Activated CD8-positive, alpha-beta T cell treated with anti-CD3 and anti-CD28 coated beads, Interleukin-2, amount 10 ng/mL, durations not matched to agents 7 days and 5 days (primary cell): ENCODE measurements at regions of chr6 and their contacts with region 1.

Region 1: GRCh38 chr6:168884050-168884645 is 369.5 kb downstream of the THBS2 start:
- DNase-seq: no peak
- ATAC-seq: peak; percentile 68
- H3K4me3 Mint-ChIP-seq: peak overlapping the region; percentile 77
- H3K27ac Mint-ChIP-seq: peak overlapping the region; percentile 87
- H3K4me1 Mint-ChIP-seq: peaks cover 7% of the 10 kb centered on the region
- H3K27me3 Mint-ChIP-seq: no peaks in the 10 kb centered on the region

Region 2: DNA sequence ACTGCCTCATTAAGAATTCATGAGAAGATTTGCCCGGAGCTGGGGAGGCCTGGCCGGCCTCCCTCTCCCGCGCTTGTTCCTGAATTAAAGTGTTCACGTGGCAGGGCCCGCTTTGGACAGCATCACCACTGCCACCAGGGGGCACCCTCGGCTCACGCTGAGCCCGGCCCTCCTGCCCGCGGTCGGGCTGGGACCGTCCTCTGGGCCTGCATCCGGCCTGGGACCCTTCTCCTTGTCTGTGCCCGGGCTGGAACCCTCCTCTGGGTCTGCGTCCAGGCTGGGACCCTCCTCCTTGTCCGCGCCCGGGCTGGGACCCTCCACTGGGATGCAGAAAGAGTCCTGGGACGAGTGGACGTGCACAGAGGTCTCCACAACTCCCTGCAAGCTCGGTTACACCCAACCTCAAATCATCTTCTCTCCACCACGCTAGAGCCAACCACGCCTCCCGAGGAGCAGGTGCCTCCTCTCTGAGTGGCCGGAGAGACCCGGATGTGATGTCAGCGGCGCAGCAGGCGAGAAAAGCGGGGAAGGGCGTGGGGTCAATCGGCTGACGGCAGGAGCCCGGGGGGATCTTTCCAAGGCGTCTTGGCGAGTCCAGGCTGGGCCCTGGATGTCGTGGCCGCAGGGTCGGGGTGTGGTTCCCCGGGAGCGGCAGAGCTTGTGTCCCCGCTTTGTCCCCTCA is 513.7 kb before region 1 on chr6:
- CTCF ChIA-PET with region 1: interaction called, 11 read pairs
- POLR2A ChIA-PET with region 1: no interaction called
- DNase-seq: peak; percentile 69
- ATAC-seq: peak; percentile 85
- H3K4me3 Mint-ChIP-seq: no peak overlapping the region
- H3K27ac Mint-ChIP-seq: no peak overlapping the region
- H3K4me1 Mint-ChIP-seq: peaks cover 2% of the 10 kb centered on the region
- H3K27me3 Mint-ChIP-seq: no peaks in the 10 kb centered on the region

Region 3: DNA sequence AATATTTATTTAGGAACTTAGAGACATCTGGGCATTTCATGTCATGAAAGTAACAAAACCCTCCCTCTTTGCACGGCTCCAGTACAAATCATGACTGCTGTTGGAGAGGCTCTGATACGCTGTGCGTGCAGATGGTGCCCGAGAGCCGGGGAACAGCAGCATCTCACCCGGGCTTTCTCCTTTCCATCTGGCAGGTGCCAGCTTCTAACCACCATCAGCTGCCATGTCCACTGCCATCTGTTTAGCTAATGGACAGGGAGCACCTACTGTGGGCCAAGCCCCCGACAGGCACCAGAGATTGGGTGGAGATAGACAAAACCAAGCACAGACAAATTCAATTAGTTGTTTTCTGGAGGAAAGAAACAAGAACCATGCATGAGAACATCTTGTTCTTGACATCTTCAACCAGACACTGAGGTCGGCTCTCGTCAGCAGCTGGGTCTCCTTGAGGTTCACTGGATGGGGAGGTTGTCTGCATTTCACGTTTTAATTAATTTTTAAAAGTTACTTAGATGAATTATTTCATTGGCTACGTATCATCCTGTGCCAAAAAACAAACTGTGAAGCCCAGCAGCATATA is 45.8 kb after region 1 on chr6:
- CTCF ChIA-PET with region 1: no interaction called
- POLR2A ChIA-PET with region 1: no interaction called
- DNase-seq: no peak
- ATAC-seq: no peak
- H3K4me3 Mint-ChIP-seq: no peak overlapping the region
- H3K27ac Mint-ChIP-seq: no peak overlapping the region
- H3K4me1 Mint-ChIP-seq: no peaks in the 10 kb centered on the region
- H3K27me3 Mint-ChIP-seq: peaks cover 6% of the 10 kb centered on the region